ENCODE measurements at regions of chr10 and their contacts with region 1.

Region 1: GRCh38 chr10:511101-511848 is 178.2 kb downstream of the DIP2C start:
- DNase-seq: peak; percentile 92
- ATAC-seq: peak; percentile 95
- H3K4me3 Mint-ChIP-seq: no peak overlapping the region
- H3K27ac Mint-ChIP-seq: no peak overlapping the region
- H3K4me1 Mint-ChIP-seq: peaks cover 13% of the 10 kb centered on the region
- H3K27me3 Mint-ChIP-seq: no peaks in the 10 kb centered on the region

Region 2: DNA sequence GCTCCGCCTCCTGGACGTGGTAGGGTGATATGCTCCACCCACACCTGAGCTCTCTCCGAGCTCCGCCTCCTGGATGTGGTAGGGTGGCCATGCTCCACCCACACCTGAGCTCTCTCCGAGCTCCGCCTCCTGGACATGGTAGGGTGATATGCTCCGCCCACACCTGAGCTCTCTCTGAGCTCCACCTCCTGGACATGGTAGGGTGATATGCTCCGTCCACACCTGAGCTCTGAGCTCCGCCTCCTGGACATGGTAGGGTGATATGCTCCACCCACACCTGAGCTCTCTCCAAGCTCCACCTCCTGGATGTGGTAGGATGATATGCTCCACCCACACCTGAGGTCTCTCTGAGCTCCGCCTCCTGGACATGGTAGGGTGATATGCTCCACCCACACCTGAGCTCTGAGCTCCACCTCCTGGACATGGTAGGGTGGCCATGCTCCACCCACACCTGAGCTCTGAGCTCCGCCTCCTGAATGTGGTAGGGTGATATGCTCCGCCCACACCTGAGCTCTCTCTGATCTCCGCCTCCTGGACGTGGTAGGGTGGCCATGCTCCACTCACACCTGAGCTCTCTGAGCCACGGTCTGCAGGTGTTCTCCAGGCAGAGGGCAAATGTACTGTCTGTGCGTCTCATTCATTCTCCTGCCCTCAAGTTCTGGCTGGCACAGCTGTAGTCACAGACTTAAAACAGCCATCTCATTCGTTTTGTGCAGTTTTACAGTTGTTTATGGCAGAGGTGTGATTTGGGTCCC is 74.2 kb before region 1 on chr10:
- CTCF ChIA-PET with region 1: no interaction called
- POLR2A ChIA-PET with region 1: no interaction called
- intact Hi-C with region 1: no loop called
- DNase-seq: no peak
- ATAC-seq: no peak
- H3K4me3 Mint-ChIP-seq: no peak overlapping the region
- H3K27ac Mint-ChIP-seq: no peak overlapping the region
- H3K4me1 Mint-ChIP-seq: peaks cover 34% of the 10 kb centered on the region
- H3K27me3 Mint-ChIP-seq: no peaks in the 10 kb centered on the region

Region 3: GRCh38 chr10:598415-599170 is 87.3 kb after region 1 on chr10:
- CTCF ChIA-PET with region 1: no interaction called
- POLR2A ChIA-PET with region 1: no interaction called
- intact Hi-C with region 1: no loop called
- DNase-seq: no peak
- ATAC-seq: no peak
- H3K4me3 Mint-ChIP-seq: no peak overlapping the region
- H3K27ac Mint-ChIP-seq: no peak overlapping the region
- H3K4me1 Mint-ChIP-seq: no peaks in the 10 kb centered on the region
- H3K27me3 Mint-ChIP-seq: no peaks in the 10 kb centered on the region

Region 4: DNA sequence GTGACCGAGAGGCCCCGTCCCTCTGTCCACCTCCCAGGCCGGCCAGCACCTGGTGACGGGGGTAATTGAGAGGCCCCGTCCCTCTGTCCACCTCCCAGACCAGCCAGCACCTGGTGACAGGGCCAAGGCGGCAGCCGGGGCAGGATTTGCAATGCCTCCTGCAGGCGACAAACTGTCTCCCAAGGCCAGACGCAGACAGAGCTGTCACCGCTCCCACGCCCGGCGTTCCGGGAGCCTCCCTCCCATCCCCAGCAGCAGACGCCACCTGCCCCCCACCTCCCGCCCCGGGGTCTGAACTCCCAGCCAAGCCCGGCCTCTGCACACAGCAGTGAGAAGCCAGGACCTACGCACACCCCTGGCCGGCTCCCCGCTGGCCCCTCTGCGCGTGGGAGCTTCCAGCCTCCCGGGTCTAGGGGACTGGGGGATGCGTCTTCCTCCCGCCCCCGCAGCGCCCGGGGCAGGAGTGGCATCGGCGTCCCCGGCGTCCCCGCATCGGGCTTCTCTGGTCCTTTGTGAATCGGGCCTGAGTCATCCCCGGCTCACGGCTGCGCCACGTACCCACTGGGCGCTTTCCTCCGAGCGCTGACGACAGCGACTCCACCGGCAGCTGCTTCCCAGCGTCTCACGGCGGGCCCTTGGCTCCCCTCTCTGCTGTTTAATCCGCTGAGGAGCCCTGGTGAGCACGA is 273.3 kb after region 1 on chr10:
- CTCF ChIA-PET with region 1: interaction called, 3 read pairs
- POLR2A ChIA-PET with region 1: no interaction called
- intact Hi-C with region 1: loop called (anchors 2 to 5 kb)
- DNase-seq: peak; percentile 89
- ATAC-seq: peak; percentile 95
- H3K4me3 Mint-ChIP-seq: no peak overlapping the region
- H3K27ac Mint-ChIP-seq: no peak overlapping the region
- H3K4me1 Mint-ChIP-seq: peaks cover 4% of the 10 kb centered on the region
- H3K27me3 Mint-ChIP-seq: peaks cover 14% of the 10 kb centered on the region

Region 5: DNA sequence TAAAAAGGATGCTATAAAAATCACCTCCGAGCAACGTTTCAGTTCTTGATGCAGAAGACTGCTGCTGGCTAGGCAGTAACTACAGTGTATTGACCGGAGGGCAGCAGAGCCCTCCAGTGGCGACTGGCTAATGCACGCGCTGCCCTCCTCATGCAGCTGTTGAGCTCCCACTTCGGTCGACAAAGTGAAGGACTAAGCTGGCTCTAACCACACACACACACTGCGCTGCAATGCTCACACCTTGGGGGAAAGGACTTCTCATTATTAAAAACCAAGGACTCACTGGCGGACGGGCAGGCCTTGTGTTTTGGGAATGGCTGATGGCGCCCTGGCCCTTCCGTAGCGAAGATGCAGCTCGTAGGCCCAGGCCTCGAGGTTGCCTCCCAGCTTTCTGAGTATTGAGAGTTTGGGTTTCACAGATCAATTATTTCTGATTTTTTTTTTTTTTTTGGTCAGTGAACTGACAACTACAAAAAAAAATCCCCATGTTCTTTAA is 299.1 kb after region 1 on chr10:
- CTCF ChIA-PET with region 1: interaction called, 4 read pairs
- POLR2A ChIA-PET with region 1: no interaction called
- intact Hi-C with region 1: loop called in 1 of 2 experiments (anchors 2 kb)
- DNase-seq: peak; percentile 29
- ATAC-seq: no peak
- H3K4me3 Mint-ChIP-seq: no peak overlapping the region
- H3K27ac Mint-ChIP-seq: no peak overlapping the region
- H3K4me1 Mint-ChIP-seq: no peaks in the 10 kb centered on the region
- H3K27me3 Mint-ChIP-seq: no peaks in the 10 kb centered on the region